ENCODE measurements at regions of chr9 and their contacts with region 1.

Region 1: DNA sequence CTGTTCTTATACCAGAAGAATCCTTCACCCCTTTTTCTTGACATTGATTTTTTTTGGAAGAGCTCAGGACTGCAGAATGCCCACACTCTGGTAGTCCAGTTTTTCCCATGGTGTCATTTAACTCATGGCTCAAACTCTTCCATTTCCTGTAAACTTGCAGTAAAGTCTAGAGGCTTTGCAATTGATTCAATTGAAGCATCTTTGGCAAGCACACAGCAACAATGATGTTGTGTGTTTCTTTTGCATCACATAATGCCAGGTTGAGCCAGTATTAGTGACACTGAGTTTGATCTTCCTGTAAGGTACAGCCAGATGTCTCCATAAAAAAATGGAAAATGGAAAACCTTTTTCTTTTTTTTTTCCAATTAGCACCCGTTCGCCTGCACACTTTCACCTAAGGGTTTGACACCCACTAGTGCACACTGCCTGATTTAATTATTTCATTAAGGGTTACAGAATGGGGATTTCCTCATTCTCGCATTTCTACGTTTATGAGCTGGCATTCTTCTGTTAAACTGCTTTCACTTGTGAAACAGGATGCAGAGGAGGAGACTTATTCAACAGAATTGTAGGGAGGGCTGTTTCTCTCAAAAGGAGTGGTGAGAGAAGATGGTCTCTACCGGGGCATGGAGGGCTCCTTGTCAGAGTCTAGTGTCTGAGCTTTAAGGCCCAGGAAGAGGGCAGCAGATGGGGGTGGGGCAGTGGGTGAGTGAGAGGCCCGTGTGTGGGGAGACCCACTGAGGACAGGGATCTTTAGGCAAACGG is 2.3 kb upstream of the S1PR3 start:
- DNase-seq: no peak
- ATAC-seq: peak; percentile 22
- H3K4me3 ChIP-seq: no peak overlapping the region
- H3K27ac ChIP-seq: no peak overlapping the region
- H3K4me1 ChIP-seq: peaks cover 5% of the 10 kb centered on the region
- H3K27me3 ChIP-seq: peaks cover 5% of the 10 kb centered on the region
- CTCF ChIP-seq: no peak

Region 2: GRCh38 chr9:88593537-88594185 is 395.3 kb before region 1 on chr9:
- intact Hi-C with region 1: loop called (anchors 5 kb)
- DNase-seq: no peak
- ATAC-seq: peak; percentile 83
- H3K4me3 ChIP-seq: no peak overlapping the region
- H3K27ac ChIP-seq: no peak overlapping the region
- H3K4me1 ChIP-seq: no peaks in the 10 kb centered on the region
- H3K27me3 ChIP-seq: no peaks in the 10 kb centered on the region
- CTCF ChIP-seq: peak; percentile 68

Region 3: DNA sequence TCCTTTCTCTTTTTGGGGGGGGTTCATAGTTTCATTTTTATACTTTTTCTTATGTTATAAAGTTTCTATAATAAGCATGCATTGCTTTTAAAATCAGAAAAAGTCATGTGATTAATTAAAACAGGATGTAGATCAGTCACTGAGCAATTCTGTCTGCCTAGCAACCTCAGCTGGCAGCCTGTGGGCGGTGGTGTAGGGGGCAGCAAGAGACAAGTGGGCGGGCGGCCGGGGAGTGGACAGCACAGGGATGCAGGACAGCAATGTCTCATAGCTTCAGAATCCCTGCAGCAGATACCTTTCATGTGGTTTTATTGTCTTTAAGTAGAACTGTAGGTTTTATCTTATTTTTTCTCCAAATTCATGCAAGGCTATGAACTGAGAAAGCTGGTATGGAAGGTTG is 99.6 kb before region 1 on chr9:
- intact Hi-C with region 1: no loop called
- DNase-seq: no peak
- ATAC-seq: no peak
- H3K4me3 ChIP-seq: no peak overlapping the region
- H3K27ac ChIP-seq: no peak overlapping the region
- H3K4me1 ChIP-seq: no peaks in the 10 kb centered on the region
- H3K27me3 ChIP-seq: no peaks in the 10 kb centered on the region
- CTCF ChIP-seq: no peak

Measured in upper lobe of right lung (tissue), 1 donor.